Left cardiac atrium (tissue), 4 donors: ENCODE measurements at regions of chr5 and their contacts with region 1.

Region 1: DNA sequence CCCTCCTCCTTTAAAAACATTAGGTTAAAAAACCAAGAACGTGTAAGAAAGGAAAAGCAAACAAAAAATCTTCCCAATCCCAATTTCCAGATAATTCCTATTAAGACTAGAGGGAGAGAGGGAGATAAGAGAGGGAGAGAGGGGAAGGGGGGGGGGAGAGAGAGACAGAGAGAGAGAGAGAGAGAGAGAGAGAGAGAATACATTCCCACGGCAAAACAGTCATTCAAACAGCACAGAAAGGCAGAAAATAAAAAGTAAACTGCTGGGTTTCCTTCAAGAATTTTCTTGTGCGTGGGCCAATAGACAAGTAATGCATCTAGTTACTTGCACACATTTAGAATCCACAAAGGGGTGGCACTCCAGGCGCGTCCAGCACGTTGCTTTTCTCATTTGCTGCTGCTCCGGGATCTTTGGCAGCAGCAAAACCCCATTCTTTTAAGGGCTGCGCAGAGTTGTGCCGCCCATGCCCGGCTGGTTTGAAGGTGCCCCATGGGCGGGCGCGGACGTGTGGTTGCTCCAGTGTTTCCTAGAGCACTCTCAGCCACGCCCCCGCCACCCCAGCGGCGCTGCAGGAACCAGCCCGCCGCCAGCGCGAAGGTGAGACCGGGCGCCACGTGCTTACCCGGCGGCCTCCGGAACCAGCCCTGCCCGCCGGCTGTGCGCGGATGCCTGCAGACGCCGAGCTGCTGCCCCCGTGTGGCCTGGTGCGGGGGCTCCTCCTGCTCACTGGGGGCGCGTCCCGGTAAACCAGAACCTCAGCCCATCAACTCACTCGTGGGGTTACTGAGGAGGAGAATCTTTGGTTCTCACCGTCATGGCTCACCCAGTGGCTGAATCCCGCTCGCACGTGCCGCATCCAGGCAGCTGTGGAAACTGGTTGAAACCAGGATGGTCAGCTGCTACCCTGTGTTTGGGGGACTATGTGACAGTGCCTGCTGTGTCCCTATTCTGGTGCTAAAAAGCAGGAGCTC is 44.6 kb downstream of the STC2 start:
- DNase-seq: peak; percentile 82
- ATAC-seq: peak; percentile 91 to 92

Region 2: DNA sequence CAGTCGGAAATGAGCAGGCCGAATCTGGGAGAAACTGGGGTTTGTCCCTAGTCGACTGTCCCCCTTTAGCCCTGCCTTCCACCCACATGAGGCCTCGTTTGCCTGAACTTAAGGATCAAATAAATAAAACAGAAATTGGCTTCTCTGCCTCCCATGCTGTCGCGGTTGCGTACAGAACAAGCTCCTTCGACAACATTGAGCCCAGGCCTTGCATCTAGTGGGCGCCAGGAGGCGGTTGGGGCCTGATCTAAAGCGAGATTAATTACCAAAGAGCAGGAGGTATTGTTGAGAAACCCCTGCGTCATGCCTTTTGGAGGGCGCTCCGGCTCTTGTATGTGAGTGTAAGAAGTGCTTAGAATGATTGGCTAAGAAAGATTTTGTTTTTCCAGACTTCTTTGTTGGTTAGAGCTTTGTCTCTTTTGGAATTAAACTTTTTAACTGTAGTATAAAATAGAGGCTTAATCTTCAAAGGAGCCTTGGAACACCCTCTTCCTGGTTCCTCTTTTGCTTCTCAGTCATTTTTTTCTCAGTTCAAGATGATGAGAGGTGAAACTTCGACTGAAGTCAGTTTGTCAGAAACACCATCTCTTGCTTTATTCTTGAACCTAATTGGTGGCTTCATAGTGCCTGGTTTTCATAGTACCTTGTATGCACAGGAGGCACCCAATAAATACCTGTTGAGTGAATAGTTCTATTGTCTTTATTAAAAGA is 299.2 kb before region 1 on chr5:
- intact Hi-C with region 1: loop called (anchors 2 to 10 kb)
- DNase-seq: peak; percentile 78
- ATAC-seq: peak; percentile 69 to 75

Region 3: DNA sequence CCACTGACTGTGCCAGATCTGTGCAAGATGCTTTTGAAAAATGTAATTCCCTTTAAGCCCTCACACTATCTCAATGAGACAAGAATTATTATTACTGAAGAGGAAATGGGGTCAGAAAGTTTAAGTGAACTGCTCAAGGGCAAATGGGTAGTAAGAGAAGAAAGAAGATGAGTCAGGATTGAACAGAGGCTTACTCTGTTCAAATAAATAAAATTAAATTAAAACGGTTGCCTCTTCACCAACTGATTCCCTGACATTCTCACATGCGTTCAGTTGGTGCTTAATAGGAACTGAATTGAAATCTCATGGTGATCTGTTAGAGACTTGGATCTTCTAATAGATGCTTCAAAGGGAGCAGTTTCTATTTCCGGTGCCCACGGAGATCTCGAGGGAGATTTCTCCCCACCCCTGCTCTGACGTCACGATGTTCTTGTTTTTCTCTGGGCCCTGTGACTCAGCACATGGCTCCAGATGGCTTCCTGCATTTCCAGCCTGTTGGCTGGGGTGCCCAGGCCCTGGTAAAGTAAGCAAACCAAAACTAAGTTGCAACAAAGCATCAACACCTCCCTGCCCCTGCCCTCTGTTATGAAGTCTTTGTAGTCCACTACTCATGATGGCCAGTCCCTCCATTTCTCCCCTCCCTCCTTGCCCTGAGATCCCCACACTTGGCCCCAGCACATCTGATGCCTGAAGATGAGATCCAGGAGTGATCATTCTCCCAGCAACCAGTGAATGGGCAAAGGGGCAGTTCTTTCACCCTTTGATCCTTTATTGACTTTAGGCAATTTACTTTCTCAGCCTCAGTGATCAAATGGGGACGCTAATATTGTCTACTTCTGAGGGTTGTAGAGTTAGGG is 498.4 kb after region 1 on chr5:
- intact Hi-C with region 1: no loop called
- DNase-seq: peak; percentile 88
- ATAC-seq: peak; percentile 88 to 92